Aorta (tissue), 5 donors: ENCODE measurements at regions of chr3 and their contacts with region 1.

Region 1: GRCh38 chr3:67228141-67228540 is 230.0 kb downstream of the KBTBD8 start:
- DNase-seq: no peak
- ATAC-seq: no peak
- H3K4me3 ChIP-seq: no peak overlapping the region
- H3K27ac ChIP-seq: no peak overlapping the region
- H3K4me1 ChIP-seq: no peaks in the 10 kb centered on the region
- H3K27me3 ChIP-seq: no peaks in the 10 kb centered on the region

Region 2: GRCh38 chr3:67077656-67078055 is 150.5 kb before region 1 on chr3:
- intact Hi-C with region 1: no loop called
- DNase-seq: no peak
- ATAC-seq: no peak
- H3K4me3 ChIP-seq: no peak overlapping the region
- H3K27ac ChIP-seq: no peak overlapping the region
- H3K4me1 ChIP-seq: no peaks in the 10 kb centered on the region
- H3K27me3 ChIP-seq: no peaks in the 10 kb centered on the region

Region 3: DNA sequence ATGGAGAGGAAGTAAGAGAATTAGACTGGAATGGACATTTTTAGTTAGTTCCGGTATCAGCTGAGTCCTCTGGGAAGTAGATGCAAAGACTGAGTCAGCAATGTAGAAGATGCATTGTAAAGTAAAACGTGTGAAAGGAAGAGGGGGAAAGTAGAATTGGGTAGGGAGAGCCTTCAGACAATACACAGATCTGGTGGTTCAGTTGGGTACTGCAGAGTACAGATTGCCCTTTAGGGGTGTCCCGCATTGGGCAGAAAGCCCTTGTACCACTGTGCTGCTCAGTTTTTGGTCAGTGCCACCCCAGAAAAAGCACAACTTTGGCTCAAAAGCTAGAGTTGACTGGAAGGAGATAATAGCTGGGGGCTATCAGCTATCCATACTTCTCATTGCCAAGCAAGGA is 17.4 kb after region 1 on chr3:
- intact Hi-C with region 1: loop called in 1 of 2 experiments (anchors 1 kb)
- DNase-seq: no peak
- ATAC-seq: no peak
- H3K4me3 ChIP-seq: no peak overlapping the region
- H3K27ac ChIP-seq: no peak overlapping the region
- H3K4me1 ChIP-seq: no peaks in the 10 kb centered on the region
- H3K27me3 ChIP-seq: no peaks in the 10 kb centered on the region

Region 4: DNA sequence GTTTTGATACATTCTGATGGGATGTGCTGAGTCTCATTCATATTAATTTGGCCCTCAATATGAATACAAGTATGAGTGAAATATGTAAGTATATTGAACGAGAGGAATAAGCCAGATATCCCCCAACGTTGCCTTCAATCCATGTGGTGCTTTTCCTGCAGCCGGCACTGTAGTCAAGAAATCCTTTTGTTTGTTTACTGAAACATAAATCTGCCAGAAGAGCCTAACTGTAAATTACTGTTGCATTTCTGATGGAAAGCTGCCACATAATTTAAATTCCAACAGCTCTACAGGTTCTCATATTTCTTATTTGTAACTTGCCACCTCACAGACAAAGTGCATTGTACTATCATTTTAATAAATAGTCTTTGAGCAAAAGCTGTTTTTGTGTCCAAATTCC is 84.0 kb after region 1 on chr3:
- intact Hi-C with region 1: no loop called
- DNase-seq: no peak
- ATAC-seq: no peak
- H3K4me3 ChIP-seq: no peak overlapping the region
- H3K27ac ChIP-seq: no peak overlapping the region
- H3K4me1 ChIP-seq: no peaks in the 10 kb centered on the region
- H3K27me3 ChIP-seq: peaks cover 0 to 2% of the 10 kb centered on the region in 2 donors